B cell (primary cell): ENCODE measurements at regions of chr6 and their contacts with region 1.

Region 1: GRCh38 chr6:150813319-150813992 is 52.0 kb upstream of the MTHFD1L start:
- DNase-seq: peak; percentile 65
- ATAC-seq: peak; percentile 55
- H3K4me3 ChIP-seq: no peak overlapping the region
- H3K4me3 Mint-ChIP-seq: peak overlapping the region; percentile 73
- H3K27ac ChIP-seq: peak overlapping the region; percentile 45 to 85
- H3K27ac Mint-ChIP-seq: peak overlapping the region; percentile 95
- H3K4me1 ChIP-seq: peaks cover 0 to 9% of the 10 kb centered on the region in 2 donors
- H3K4me1 Mint-ChIP-seq: peaks cover 34% of the 10 kb centered on the region
- H3K27me3 ChIP-seq: no peaks in the 10 kb centered on the region
- H3K27me3 Mint-ChIP-seq: no peaks in the 10 kb centered on the region
- CTCF ChIP-seq: no peak

Region 2: GRCh38 chr6:150068720-150069648 is 744.5 kb before region 1 on chr6 and contains the start of gene ULBP3:
- CTCF ChIA-PET with region 1: no interaction called
- POLR2A ChIA-PET with region 1: no interaction called
- intact Hi-C with region 1: loop called (anchors 1 kb)
- DNase-seq: peak; percentile 80
- ATAC-seq: peak; percentile 90
- H3K4me3 ChIP-seq: peak within 1 kb of the TSS; percentile 11 to 71 (median 70)
- H3K4me3 Mint-ChIP-seq: peak within 1 kb of the TSS; percentile 87
- H3K27ac ChIP-seq: no peak within 1 kb of the TSS
- H3K27ac Mint-ChIP-seq: peak within 1 kb of the TSS; percentile 38
- H3K4me1 ChIP-seq: peaks cover 5 to 18% of the 10 kb centered on the region in 2 donors
- H3K4me1 Mint-ChIP-seq: peaks cover 23% of the 10 kb centered on the region
- H3K27me3 ChIP-seq: peaks cover 0 to 22% (median 4%) of the 10 kb centered on the region in 4 experiments
- H3K27me3 Mint-ChIP-seq: peaks cover 18% of the 10 kb centered on the region
- CTCF ChIP-seq: peak; percentile 50
- total RNA-seq, gene ULBP3: 0.61 and 0.69 TPM in 2 replicates

Region 3: DNA sequence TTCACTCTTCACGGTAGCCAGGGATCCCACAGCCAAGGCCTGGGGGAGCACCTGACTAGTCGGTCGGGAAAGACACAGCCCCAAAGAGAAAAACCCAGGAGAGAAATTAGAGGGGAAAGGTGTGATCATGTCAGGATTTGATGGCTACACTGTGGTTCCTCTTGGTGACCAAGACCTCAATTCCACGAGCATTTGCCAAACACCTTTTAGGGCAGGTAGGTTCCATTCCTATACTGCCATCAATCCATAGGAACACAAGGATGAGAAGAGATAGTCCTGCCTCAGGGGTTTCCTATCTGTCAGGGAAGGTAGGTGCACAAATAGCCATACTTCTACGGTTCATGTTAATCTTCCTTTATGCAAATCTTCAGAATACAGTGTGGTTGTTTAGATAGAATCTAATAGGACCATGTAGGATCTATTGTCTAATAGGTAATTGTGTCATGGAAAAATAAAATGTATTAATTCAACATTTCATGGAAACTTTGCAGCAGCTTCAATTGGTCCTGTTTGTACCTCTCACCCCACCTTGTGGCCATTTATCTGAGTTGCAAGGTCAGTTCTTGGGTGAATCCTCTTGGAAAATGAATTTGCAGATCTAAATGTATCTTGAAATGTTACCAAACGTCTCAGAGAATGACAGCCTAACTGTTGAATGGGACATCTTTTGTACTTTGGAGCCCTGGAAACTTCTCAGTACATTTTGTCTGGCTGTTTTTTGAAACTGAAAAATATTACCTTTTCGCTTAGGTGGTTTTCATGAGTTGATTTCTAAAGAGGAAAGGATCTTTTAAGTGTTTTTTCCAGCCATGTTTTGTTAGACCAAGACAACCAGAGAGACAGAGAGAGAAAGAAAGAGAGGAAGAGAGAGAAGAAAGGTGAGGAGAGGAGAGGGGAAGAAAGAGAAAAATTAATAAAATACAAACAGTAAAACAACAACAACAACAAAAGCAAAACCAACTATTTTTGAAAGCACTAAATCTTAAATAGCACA is 478.4 kb before region 1 on chr6:
- CTCF ChIA-PET with region 1: interaction called, 5 read pairs
- POLR2A ChIA-PET with region 1: no interaction called
- intact Hi-C with region 1: loop called (anchors 1 kb)
- DNase-seq: peak; percentile 66
- ATAC-seq: peak; percentile 45
- H3K4me3 ChIP-seq: no peak overlapping the region
- H3K4me3 Mint-ChIP-seq: no peak overlapping the region
- H3K27ac ChIP-seq: no peak overlapping the region
- H3K27ac Mint-ChIP-seq: no peak overlapping the region
- H3K4me1 ChIP-seq: no peaks in the 10 kb centered on the region
- H3K4me1 Mint-ChIP-seq: no peaks in the 10 kb centered on the region
- H3K27me3 ChIP-seq: no peaks in the 10 kb centered on the region
- H3K27me3 Mint-ChIP-seq: peaks cover 33% of the 10 kb centered on the region
- CTCF ChIP-seq: peak; percentile 88

Region 4: GRCh38 chr6:150409576-150410066 is 403.8 kb before region 1 on chr6:
- CTCF ChIA-PET with region 1: interaction called, 35 read pairs
- POLR2A ChIA-PET with region 1: interaction called, 3 read pairs
- intact Hi-C with region 1: no loop called
- DNase-seq: peak; percentile 78
- ATAC-seq: peak; percentile 47
- H3K4me3 ChIP-seq: no peak overlapping the region
- H3K4me3 Mint-ChIP-seq: no peak overlapping the region
- H3K27ac ChIP-seq: no peak overlapping the region
- H3K27ac Mint-ChIP-seq: no peak overlapping the region
- H3K4me1 ChIP-seq: peaks cover 8% of the 10 kb centered on the region in 2 donors
- H3K4me1 Mint-ChIP-seq: peaks cover 5% of the 10 kb centered on the region
- H3K27me3 ChIP-seq: peaks cover 0 to 9% (median 5%) of the 10 kb centered on the region in 4 experiments
- H3K27me3 Mint-ChIP-seq: peaks cover 32% of the 10 kb centered on the region
- CTCF ChIP-seq: no peak

Region 5: GRCh38 chr6:150741633-150742504 is 71.6 kb before region 1 on chr6:
- CTCF ChIA-PET with region 1: interaction called, 12 read pairs
- POLR2A ChIA-PET with region 1: interaction called, 3 read pairs
- intact Hi-C with region 1: loop called (anchors 5 kb)
- DNase-seq: peak; percentile 77
- ATAC-seq: peak; percentile 33
- H3K4me3 ChIP-seq: no peak overlapping the region
- H3K4me3 Mint-ChIP-seq: no peak overlapping the region
- H3K27ac ChIP-seq: peak overlapping the region in 1 of 2 donors; percentile 31
- H3K27ac Mint-ChIP-seq: peak overlapping the region; percentile 27
- H3K4me1 ChIP-seq: peaks cover 13 to 17% of the 10 kb centered on the region in 2 donors
- H3K4me1 Mint-ChIP-seq: peaks cover 67% of the 10 kb centered on the region
- H3K27me3 ChIP-seq: no peaks in the 10 kb centered on the region
- H3K27me3 Mint-ChIP-seq: no peaks in the 10 kb centered on the region
- CTCF ChIP-seq: peak; percentile 82